Mammary epithelial cell (primary cell): ENCODE measurements at regions of chr14 and their contacts with region 1.

Region 1: GRCh38 chr14:60339571-60339970 is 90.5 kb downstream of the PPM1A start:
- DNase-seq: no peak
- H3K4me3 ChIP-seq: no peak overlapping the region
- H3K27ac ChIP-seq: no peak overlapping the region
- H3K4me1 ChIP-seq: no peaks in the 10 kb centered on the region
- H3K27me3 ChIP-seq: no peaks in the 10 kb centered on the region
- CTCF ChIP-seq: no peak

Region 2: GRCh38 chr14:59320763-59321640 is 1018.6 kb before region 1 on chr14:
- CTCF ChIA-PET with region 1: interaction called, 10 read pairs
- dilution Hi-C with region 1: no loop called
- in situ Hi-C with region 1: no loop called
- intact Hi-C with region 1: no loop called
- DNase-seq: peak; percentile 72
- H3K4me3 ChIP-seq: no peak overlapping the region
- H3K27ac ChIP-seq: peak overlapping the region; percentile 51
- H3K4me1 ChIP-seq: peaks cover 17% of the 10 kb centered on the region
- H3K27me3 ChIP-seq: no peaks in the 10 kb centered on the region
- CTCF ChIP-seq: no peak